Mammary epithelial cell (primary cell): ENCODE measurements at regions of chr11 and their contacts with region 1.

Region 1: DNA sequence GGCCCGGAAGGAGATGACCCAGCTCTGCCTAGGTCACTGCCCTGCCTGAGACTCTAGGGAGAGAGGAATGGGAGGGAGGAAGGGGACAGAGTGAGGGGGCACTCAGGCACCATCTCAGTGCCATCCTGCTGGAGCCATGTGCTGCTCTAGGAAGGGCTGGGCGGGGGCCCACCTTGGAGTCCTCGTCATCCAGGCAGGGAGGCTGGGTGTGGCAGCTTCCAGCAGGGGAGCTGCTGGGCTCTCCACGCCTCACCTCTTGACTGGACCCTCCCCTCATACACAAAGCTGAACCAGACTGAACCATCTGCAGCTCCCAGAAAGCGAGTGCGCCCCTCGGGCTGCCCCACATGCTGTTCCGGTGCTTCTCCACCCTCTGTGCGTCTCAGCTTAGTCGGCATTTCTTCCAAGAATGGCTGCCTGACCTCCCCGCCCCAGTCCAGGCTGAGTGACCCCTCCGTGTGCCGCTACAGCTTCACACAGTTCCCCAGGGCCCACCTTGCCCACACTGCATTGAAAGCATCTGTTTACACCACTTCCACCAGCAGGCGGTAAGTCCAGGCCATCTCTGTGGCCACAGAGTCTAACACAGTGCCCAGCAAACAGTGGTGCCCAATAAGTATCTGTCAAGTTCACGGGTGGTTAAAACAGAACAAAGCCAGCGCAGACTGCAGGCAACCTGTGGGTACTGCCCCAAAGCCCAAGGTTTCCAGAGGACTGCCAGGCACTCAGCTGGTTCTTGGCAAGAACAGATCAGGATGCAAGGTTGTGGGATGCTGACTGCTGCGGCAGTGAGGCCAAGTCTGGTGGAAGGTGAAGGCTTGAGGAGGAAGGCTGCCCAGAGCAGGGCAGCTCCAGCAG is 9.4 kb upstream of the TRIM29 start:
- DNase-seq: no peak
- H3K4me3 ChIP-seq: no peak overlapping the region
- H3K27ac ChIP-seq: no peak overlapping the region
- H3K4me1 ChIP-seq: peaks cover 12% of the 10 kb centered on the region
- H3K27me3 ChIP-seq: no peaks in the 10 kb centered on the region
- CTCF ChIP-seq: peak in 1 of 2 donors; percentile 20

Region 2: DNA sequence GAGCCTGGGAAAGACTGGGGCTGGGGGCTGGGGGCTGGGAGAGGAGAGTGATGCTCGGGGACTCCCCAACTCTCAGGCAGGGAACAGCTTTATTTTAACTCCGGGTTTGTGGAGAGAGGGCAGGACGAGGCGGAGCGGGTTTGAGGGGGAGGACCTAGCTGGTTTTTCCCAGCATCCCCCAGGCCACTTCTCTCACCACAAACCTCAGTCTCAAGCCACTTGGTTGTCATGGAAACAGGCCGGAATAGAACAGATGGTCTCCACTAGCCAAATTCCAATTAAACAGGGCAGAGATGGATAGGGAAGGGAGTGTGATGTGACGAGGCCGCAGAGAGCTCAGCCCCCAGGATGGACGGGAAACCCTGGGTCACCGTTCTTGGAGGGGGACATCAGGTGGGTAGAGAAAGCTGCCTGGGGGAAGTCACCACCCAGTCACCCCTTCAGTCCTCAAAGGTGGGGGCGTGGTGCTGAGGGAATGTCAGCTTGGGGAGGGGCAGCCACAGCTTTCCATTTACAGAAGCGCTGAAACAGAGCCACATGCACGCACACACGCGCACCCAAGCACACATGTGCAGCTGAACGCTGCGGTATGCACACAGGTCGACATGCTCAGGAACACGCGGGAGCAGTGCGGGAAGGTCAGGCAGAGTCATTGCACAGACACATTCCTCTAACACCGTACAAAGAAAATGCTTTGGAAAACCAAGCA is 437.5 kb before region 1 on chr11:
- CTCF ChIA-PET with region 1: no interaction called
- dilution Hi-C with region 1: loop called (anchors 10 kb)
- in situ Hi-C with region 1: no loop called
- intact Hi-C with region 1: no loop called
- DNase-seq: no peak
- H3K4me3 ChIP-seq: no peak overlapping the region
- H3K27ac ChIP-seq: no peak overlapping the region
- H3K4me1 ChIP-seq: peaks cover 30% of the 10 kb centered on the region
- H3K27me3 ChIP-seq: no peaks in the 10 kb centered on the region
- CTCF ChIP-seq: no peak

Region 3: DNA sequence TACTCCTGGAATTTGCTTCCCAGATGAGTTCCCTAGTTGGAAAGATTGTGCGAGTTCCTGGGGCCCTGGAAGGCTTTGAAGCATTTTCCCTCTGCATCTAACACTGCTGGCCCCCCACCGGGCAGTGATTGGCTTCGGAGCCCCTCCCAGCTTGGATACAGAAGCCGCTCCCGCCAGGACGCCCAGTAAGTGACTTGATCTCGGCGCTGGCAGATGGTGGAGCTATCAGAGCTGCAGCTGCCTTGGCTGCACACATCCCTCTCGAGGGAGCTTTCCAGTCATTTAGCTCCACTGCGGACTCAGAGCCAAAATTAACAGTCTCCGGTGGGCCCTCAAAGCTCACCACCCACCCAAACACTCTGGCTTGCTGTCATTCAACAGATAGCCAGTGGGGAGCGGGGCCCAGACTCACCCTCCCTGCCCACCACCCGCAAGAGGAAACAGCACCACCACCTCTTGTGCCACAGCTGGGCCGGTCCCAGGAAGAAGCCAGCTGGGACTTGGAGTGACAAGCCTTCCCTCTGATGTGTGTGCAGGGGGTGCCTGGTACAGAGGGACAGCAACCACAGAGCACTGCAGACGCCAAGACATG is 171.7 kb before region 1 on chr11:
- CTCF ChIA-PET with region 1: no interaction called
- dilution Hi-C with region 1: no loop called
- in situ Hi-C with region 1: no loop called
- intact Hi-C with region 1: no loop called
- DNase-seq: no peak
- H3K4me3 ChIP-seq: no peak overlapping the region
- H3K27ac ChIP-seq: no peak overlapping the region
- H3K4me1 ChIP-seq: no peaks in the 10 kb centered on the region
- H3K27me3 ChIP-seq: peaks cover 3% of the 10 kb centered on the region
- CTCF ChIP-seq: no peak

Region 4: DNA sequence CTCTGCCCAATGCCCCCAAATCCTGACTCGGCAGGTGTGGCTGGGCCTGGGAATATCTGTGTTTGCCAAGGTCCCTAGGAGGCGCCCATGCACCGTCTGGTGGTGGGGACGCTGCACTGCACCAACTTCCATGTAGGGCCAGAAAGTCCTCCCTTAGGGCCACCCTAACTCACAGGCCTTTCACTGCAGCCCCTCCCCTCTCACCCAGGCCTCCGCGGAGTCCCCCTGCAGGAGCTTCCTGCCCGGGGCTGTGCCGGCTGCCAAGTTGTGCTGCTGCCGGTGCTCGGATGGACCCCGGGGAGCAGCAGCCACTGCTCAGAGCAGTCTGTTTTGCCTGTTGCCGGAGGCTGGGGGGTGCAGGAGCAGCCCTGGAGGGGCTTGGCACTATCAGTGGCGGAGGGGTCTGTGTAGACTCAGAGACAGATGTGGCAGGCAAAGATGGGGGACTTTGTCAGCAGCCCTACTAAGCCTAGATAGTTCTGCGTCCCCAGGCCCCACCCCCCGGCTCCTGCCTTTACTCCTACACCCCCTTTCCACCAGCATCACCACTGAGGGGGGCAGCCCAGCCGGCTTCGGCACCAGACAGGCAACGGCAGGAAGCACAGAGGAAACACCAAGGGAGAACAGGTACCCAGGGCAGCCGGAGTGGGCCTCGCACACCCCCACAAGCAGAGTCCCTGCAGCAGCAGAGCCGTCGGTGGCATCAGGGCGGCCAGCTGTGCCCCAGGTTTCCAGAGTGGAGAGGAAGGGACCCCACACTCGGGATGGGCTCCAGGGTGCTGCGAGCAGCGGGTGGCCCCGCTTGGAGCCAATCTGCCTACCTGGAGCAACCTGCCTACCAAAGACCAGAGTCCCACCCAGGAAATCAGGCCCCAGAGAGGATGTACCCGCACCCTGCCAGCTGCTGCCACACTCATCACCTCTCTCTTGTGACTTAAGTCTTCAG is 133.7 kb before region 1 on chr11:
- CTCF ChIA-PET with region 1: no interaction called
- dilution Hi-C with region 1: no loop called
- in situ Hi-C with region 1: no loop called
- intact Hi-C with region 1: no loop called
- DNase-seq: peak; percentile 40
- H3K4me3 ChIP-seq: no peak overlapping the region
- H3K27ac ChIP-seq: no peak overlapping the region
- H3K4me1 ChIP-seq: no peaks in the 10 kb centered on the region
- H3K27me3 ChIP-seq: peaks cover 2% of the 10 kb centered on the region
- CTCF ChIP-seq: peak; percentile 87 to 98

Region 5: GRCh38 chr11:120024046-120024445 is 123.3 kb before region 1 on chr11:
- CTCF ChIA-PET with region 1: no interaction called
- dilution Hi-C with region 1: no loop called
- in situ Hi-C with region 1: no loop called
- intact Hi-C with region 1: no loop called
- DNase-seq: no peak
- H3K4me3 ChIP-seq: no peak overlapping the region
- H3K27ac ChIP-seq: no peak overlapping the region
- H3K4me1 ChIP-seq: peaks cover 11% of the 10 kb centered on the region
- H3K27me3 ChIP-seq: no peaks in the 10 kb centered on the region
- CTCF ChIP-seq: no peak

Region 6: DNA sequence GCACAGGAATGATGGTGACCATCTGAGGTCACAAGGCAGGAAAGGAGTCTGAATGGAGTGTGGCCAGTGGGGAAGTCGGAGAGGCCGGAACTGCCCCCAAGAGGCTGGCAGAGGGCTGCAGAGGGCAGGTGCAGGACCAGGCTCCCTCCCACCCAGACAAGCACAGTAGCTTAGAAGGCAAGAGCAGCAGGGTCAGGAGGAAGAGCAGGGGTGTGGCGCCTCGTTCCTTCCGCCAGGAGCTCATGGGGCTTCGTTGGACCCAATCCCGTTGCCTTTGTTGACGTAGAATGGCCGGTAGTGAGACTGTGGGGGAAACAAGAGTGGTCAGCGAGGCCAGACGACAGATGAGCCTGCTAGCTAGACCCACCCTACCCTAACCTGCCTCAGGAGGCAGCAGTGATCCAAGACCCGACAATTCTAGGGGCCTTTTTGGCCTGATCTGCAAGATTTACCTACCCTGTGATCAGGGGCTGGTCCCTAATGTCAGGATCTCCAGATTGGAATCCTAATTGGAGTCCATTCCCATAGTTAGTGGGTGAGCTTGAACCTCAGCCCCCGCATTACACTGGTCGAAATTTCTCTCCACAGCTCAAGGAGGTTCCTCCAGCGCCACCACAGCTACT is 35.0 kb before region 1 on chr11:
- CTCF ChIA-PET with region 1: no interaction called
- dilution Hi-C with region 1: no loop called
- in situ Hi-C with region 1: no loop called
- intact Hi-C with region 1: no loop called
- DNase-seq: no peak
- H3K4me3 ChIP-seq: no peak overlapping the region
- H3K27ac ChIP-seq: no peak overlapping the region
- H3K4me1 ChIP-seq: peaks cover 5% of the 10 kb centered on the region
- H3K27me3 ChIP-seq: no peaks in the 10 kb centered on the region
- CTCF ChIP-seq: peak in 1 of 2 donors; percentile 14